Pancreas (tissue), 10 donors: ENCODE measurements at regions of chr5 and their contacts with region 1.

Region 1: GRCh38 chr5:32076699-32077695 is 97.1 kb downstream of the GOLPH3 start:
- DNase-seq: peak in 1 of 6 donors; percentile 38
- ATAC-seq: peak in 3 of 4 donors; percentile 52 to 71 (median 65)
- H3K4me3 ChIP-seq: no peak overlapping the region
- H3K27ac ChIP-seq: no peak overlapping the region
- H3K4me1 ChIP-seq: no peaks in the 10 kb centered on the region
- H3K27me3 ChIP-seq: no peaks in the 10 kb centered on the region
- CTCF ChIP-seq: peak in 3 of 4 donors; percentile 39 to 49 (median 46)

Region 2: GRCh38 chr5:31573494-31574142 is 503.4 kb before region 1 on chr5:
- intact Hi-C with region 1: loop called in 1 of 3 experiments (anchors 10 kb)
- DNase-seq: no peak
- ATAC-seq: no peak
- H3K4me3 ChIP-seq: no peak overlapping the region
- H3K27ac ChIP-seq: no peak overlapping the region
- H3K4me1 ChIP-seq: no peaks in the 10 kb centered on the region
- H3K27me3 ChIP-seq: no peaks in the 10 kb centered on the region
- CTCF ChIP-seq: no peak

Region 3: DNA sequence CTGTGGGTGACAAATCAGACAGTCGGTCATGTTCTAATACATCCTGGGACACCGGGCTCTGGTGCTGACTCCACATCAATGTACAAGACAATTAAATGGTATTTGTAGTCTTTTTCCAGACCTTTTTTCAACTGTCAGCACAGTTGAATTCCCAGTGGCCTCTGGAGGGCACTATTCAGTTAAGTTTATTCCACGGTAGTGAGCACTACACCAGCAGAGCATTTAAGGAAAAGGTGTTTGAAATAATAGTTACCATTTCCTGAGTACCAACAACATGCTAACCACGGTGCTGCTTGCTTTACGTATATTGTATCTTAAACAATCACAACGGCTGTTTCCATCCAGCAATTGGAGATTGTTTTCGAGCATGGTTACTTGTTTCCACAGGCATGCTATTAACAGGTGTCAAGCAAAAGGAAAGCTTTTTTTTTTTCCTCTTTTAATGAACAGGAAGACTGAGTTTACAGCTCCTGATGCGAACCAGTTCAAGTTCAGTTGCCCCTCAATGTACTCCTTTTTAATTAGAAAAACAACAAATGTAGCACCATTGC is 251.4 kb before region 1 on chr5:
- intact Hi-C with region 1: loop called in 1 of 3 experiments (anchors 10 kb)
- DNase-seq: peak in 3 of 6 donors; percentile 15 to 55 (median 16)
- ATAC-seq: peak; percentile 55 to 94 (median 88)
- H3K4me3 ChIP-seq: no peak overlapping the region
- H3K27ac ChIP-seq: no peak overlapping the region
- H3K4me1 ChIP-seq: no peaks in the 10 kb centered on the region
- H3K27me3 ChIP-seq: no peaks in the 10 kb centered on the region
- CTCF ChIP-seq: peak; percentile 14 to 49 (median 45)

Region 4: GRCh38 chr5:32193591-32193990 is 116.6 kb after region 1 on chr5:
- intact Hi-C with region 1: no loop called
- DNase-seq: peak; percentile 90 to 95 (median 93)
- ATAC-seq: peak; percentile 95 to 97 (median 96)
- H3K4me3 ChIP-seq: peak overlapping the region in 1 of 4 donors; percentile 13
- H3K27ac ChIP-seq: peak overlapping the region; percentile 15 to 85 (median 62)
- H3K4me1 ChIP-seq: peaks cover 7 to 14% (median 9%) of the 10 kb centered on the region in 3 donors
- H3K27me3 ChIP-seq: no peaks in the 10 kb centered on the region
- CTCF ChIP-seq: no peak